Aorta (tissue), 5 donors: ENCODE measurements at regions of chr14 and their contacts with region 1.

Region 1: DNA sequence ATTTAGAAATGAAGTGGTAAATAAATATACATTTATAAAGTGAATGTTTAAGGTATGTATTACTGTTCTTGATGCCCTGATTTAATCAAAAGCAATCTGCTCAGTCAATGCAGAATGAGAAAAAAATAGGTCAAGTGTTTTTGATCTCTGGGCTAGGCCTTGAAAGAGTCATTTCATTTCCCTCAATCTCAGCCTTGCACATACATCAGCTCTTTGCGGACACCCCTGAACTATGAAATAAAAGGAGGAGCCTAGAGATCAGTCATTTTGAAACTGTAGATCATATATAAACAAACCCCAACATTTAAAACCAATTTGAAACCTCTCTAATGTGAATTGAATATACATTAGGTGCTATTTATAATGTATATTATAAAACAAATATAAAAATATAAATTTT is 42.5 kb downstream of the ATG2B start:
- DNase-seq: no peak
- ATAC-seq: no peak
- H3K4me3 ChIP-seq: no peak overlapping the region
- H3K27ac ChIP-seq: no peak overlapping the region
- H3K4me1 ChIP-seq: no peaks in the 10 kb centered on the region
- H3K27me3 ChIP-seq: no peaks in the 10 kb centered on the region

Region 2: DNA sequence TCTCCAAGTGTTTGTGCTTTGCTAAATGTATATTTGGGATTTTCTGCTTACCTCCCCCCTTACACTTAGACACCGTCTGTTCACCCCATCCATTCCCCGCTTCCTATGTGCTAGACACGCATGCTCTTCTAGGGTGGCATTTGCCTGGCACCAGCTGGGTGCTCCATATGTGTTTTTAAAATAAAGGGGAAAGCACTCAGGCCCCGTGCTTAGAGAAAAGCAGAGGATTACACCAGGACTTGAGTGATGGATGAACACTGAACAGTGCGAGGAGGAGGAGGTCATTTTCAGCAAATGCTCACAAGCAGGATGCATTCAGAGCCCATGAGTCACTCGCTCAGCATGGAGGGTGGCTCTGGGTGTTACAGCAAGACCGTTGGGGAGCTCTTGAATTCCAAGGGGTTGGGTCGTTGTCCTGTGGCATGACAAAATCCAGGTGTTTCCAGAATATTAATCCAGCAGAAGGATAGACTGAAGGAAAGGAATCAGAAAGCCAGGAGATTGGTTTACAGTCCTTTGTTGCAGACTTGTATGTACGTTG is 67.5 kb before region 1 on chr14:
- intact Hi-C with region 1: no loop called
- DNase-seq: no peak
- ATAC-seq: no peak
- H3K4me3 ChIP-seq: no peak overlapping the region
- H3K27ac ChIP-seq: no peak overlapping the region
- H3K4me1 ChIP-seq: no peaks in the 10 kb centered on the region
- H3K27me3 ChIP-seq: no peaks in the 10 kb centered on the region

Region 3: DNA sequence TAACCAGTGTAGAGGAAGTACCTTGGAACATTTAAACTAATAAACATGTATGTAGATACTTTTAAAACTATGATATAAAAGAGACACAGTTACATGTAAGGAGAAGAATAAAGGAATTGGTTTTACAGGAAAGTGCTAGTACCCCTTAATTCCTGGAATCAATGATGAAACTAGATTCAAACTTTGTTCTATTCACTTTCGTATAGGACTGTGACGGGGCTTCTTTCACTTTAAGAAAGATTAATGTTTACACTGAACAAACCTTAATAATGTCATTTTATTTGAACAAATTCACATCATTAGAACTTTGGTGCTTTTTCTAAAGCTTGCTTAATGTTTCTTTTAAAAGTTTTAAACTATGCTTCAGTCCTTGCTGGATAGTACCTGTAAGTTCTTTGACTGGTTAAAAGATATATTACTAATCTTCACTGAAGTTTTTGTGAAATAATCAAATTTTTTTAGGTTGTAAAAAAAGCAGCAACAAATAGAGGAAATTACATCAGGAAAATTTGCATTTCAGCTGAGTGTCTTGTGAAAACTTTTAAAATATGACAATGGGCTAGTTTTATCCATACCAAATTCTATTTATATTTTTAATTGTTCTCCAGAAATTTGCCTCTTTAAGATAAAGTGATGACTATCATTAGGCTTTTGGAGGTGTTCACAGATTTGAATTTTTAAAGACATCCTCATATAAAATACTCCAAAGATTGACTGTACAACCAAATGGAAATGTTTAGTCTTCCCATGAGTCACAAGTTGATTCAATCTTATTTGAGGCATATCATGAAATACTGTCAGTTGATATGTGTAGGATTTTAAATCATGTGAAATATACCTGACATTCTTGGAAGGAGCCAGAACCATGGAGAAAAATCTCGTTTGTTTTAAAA is 217.7 kb after region 1 on chr14:
- intact Hi-C with region 1: loop called in 1 of 2 experiments (anchors 10 kb)
- DNase-seq: no peak
- ATAC-seq: no peak
- H3K4me3 ChIP-seq: no peak overlapping the region
- H3K27ac ChIP-seq: no peak overlapping the region
- H3K4me1 ChIP-seq: no peaks in the 10 kb centered on the region
- H3K27me3 ChIP-seq: no peaks in the 10 kb centered on the region